Activated CD4-positive, alpha-beta T cell treated with anti-CD3 and anti-CD28 coated beads, Interleukin-2, amount 10 ng/mL, durations not matched to agents 7 days and 5 days (primary cell): ENCODE measurements at regions of chr12 and their contacts with region 1.

Region 1: DNA sequence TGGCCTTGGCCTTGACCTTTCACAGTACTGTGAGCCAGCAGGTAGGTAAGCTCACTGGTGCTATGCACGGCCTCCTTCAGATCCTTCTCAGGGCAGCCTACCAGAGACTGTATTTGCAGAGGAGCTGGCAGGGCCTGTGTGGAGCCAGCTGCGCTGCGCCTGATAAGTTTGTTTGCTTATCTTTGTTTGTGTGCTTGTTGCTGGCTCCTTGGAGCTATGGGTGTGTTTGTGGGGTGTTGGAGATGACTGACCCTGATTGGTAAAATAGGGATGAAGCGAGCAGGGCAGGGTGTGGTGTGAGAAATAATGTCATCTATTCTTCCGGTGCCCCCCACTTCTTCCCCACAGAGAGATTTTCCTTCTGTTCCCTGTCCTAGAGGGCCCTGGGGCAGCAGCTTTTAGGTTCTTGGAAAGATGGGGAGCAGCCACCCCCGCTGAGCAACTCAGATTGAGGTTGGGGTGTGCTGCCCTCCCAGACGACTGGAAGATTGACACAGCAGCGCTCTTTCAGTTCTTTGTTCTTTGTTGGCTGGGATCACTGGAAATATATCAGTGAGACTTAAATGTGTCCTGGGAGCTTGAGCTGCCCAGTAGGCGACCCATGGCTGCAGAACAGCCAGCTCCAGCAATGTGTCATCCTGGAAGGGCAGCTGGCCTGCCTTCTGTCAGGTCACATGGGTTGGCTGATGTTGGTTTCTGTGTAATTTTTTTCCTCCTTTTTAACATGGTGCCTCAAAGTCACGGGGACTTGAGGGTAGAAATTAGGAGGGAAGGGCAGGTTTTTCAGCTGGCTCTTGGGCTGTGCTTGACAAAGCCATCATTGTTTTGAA is 19.6 kb downstream of the MLXIP start:
- DNase-seq: no peak
- H3K4me3 Mint-ChIP-seq: no peak overlapping the region
- H3K27ac Mint-ChIP-seq: peak overlapping the region; percentile 71
- H3K4me1 Mint-ChIP-seq: peaks cover 55% of the 10 kb centered on the region
- H3K27me3 Mint-ChIP-seq: no peaks in the 10 kb centered on the region

Region 2: DNA sequence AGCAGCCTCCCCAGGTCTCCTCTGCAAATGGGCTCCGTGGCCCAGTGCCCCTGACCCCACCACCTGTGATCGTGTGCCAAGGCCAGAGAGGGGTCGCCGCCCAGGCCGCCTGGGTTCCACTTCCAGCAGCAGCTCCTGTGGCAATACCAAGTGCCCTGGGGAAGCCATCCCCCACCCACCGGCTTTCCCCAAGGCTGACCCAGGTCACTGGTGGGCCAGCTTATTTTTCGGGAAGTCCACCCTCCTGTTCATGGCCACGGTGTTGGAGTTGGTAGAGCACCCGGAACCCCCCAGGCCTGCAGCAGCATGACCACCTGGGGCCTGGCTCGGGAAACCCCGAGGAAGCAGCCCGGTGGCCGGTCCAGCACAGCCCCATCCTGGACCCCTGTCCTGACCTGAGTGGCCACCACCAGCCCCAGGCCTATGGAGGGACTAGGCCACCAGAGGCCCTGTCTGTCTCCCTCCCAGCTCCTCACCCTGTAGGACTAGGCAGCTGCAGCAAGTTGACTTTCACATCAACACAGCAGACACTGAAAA is 1018.3 kb before region 1 on chr12:
- CTCF ChIA-PET with region 1: no interaction called
- POLR2A ChIA-PET with region 1: no interaction called
- DNase-seq: no peak
- H3K4me3 Mint-ChIP-seq: no peak overlapping the region
- H3K27ac Mint-ChIP-seq: no peak overlapping the region
- H3K4me1 Mint-ChIP-seq: no peaks in the 10 kb centered on the region
- H3K27me3 Mint-ChIP-seq: peaks cover 4% of the 10 kb centered on the region

Region 3: GRCh38 chr12:122087431-122088178 is 10.5 kb before region 1 on chr12:
- CTCF ChIA-PET with region 1: interaction called, 13 read pairs
- POLR2A ChIA-PET with region 1: interaction called, 3 read pairs
- DNase-seq: no peak
- H3K4me3 Mint-ChIP-seq: no peak overlapping the region
- H3K27ac Mint-ChIP-seq: no peak overlapping the region
- H3K4me1 Mint-ChIP-seq: peaks cover 74% of the 10 kb centered on the region
- H3K27me3 Mint-ChIP-seq: no peaks in the 10 kb centered on the region

Region 4: DNA sequence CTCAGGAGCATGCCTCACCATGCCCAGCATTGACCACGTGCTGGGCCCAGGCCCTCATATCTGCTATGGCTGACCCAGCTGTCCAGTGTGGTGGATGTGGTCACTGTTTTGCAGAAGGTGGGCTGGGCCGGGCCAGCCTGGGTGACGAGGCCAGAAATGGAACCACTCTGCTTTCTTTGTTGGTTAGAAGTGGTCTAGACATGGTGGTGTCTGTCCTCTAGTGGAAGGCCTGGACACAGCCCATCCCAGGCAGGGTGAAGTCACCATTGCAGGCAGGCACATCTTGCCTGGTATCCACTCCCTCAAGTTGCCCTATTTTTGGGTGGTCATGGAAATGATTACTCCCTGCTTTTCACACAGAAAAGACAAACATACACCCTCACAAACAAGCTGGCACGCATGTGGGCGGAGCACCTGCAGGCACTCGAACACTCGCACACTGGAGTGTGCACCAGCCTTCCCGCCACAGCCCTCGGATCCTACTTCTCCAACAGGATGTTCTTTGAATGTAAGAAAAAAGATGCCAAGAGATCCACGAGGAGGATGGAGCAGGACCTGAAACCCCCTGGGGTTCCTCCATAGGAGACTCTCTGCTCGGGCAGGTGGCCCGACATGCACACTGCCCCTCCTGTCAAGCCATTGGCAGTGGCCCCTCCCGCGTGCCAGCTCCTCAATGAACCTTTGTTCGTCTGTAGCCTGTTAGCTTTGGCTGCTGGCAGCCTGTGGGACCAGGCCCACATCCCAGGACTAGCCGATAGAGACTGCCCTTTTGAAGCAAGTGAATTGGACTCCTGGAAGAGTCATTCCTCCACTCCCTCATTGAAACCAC is 18.8 kb after region 1 on chr12:
- CTCF ChIA-PET with region 1: no interaction called
- POLR2A ChIA-PET with region 1: no interaction called
- DNase-seq: no peak
- H3K4me3 Mint-ChIP-seq: no peak overlapping the region
- H3K27ac Mint-ChIP-seq: no peak overlapping the region
- H3K4me1 Mint-ChIP-seq: peaks cover 13% of the 10 kb centered on the region
- H3K27me3 Mint-ChIP-seq: no peaks in the 10 kb centered on the region